Psoas muscle (tissue), 8 donors: ENCODE measurements at regions of chr10 and their contacts with region 1.

Region 1: DNA sequence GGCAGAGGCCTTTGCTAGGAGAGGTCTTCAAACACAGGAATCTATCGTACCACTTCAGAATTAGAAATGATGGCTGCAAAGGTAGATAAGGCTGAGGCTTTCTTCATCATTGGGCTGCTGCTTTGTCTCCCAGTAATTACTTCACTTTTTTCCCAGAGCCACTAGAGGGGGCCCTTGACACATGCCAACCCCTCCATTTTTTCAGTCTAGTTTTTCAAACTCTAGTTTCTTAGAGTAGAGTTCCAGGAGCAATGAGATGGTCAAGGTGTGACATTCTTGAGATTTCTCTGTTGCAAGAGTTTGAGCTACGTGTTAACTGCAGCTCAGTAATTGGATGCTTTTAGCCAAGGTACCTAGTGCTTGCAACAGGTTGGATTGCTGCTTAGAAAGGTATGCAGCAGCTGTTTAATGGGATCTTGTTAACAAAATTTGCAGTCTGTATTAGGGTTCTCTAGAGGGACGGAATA is 33.8 kb upstream of the RBM20 start:
- DNase-seq: no peak
- ATAC-seq: peak; percentile 77 to 85 (median 80)
- H3K4me3 ChIP-seq: no peak overlapping the region
- H3K27ac ChIP-seq: peak overlapping the region; percentile 72
- H3K4me1 ChIP-seq: peaks cover 22% of the 10 kb centered on the region
- H3K27me3 ChIP-seq: no peaks in the 10 kb centered on the region
- CTCF ChIP-seq: peak; percentile 86

Region 2: DNA sequence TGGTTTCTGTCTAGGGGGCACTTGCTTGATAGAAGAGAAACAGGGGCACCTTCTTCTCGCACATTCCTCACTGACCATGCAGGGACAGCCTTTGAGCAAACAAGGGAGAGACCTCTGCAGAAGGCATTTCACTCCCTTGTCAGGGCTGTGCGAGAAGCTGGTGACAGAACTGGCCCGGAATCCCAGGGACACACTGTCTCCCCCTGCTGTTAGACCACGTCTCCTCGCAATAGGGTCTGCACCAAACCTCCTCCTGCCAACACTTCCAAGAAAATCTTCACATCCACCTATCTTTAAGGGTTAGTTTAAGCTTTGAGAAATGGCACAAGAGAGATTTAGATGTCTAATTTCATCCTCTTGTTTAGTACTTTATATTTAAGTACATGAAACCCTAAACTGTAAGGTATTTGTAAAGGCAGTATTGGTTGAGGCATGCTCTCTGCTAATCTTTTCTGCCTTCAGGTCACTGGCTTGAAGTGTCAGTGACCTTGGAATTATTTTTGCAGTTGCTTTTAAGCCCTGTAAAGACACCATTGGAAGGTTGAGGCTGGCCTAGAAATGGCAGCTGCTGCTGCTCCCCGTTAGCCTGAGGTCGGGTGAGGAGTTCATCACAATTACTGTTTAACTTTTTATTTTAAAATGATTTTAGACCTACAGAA is 70.8 kb after region 1 on chr10:
- intact Hi-C with region 1: loop called (anchors 2 to 5 kb)
- DNase-seq: peak in 1 of 2 donors; percentile 34
- ATAC-seq: peak; percentile 51 to 63 (median 60)
- H3K4me3 ChIP-seq: peak overlapping the region; percentile 50
- H3K27ac ChIP-seq: peak overlapping the region; percentile 89
- H3K4me1 ChIP-seq: peaks cover 42% of the 10 kb centered on the region
- H3K27me3 ChIP-seq: no peaks in the 10 kb centered on the region
- CTCF ChIP-seq: peak; percentile 68

Region 3: GRCh38 chr10:110701617-110701971 is 91.3 kb after region 1 on chr10:
- intact Hi-C with region 1: loop called in 1 of 2 experiments (anchors 5 kb)
- DNase-seq: no peak
- ATAC-seq: no peak
- H3K4me3 ChIP-seq: no peak overlapping the region
- H3K27ac ChIP-seq: peak overlapping the region; percentile 86
- H3K4me1 ChIP-seq: peaks cover 56% of the 10 kb centered on the region
- H3K27me3 ChIP-seq: no peaks in the 10 kb centered on the region
- CTCF ChIP-seq: no peak

Region 4: DNA sequence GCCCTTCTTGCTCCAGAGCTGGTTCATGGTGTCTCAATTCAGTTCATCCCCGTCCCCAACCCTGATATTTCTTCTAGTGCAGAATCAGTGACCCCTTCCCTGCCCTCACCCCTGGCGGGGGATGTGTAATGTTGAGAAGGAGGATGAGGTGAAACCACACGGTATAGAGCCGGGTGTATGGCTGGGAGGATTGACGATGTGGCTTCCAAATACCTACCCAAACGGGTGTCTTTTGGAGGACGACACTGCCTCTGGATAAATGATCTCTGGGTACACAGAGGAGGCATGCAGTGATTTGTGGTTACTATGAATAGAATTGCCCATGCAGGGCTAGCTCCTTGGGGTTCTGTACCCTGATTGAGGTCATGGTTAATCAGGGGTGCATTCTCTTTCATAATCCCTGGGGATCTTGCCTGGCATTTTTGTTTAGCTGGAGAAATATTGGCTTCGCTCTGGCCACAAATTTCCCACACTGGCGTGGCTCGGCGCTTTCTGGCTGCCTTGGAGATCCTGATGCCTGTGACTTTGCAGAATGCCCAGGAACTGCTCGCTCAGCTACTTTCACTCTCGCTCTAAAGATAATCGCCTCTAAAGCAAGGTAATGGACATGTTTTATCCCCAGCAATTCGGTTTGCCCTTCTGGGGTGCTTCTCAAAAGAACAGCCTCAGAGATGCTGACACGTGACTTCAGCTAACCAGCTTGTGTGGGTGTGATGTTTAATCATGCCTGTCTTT is 123.0 kb after region 1 on chr10:
- intact Hi-C with region 1: loop called in 1 of 2 experiments (anchors 5 kb)
- DNase-seq: peak in 1 of 2 donors; percentile 71
- ATAC-seq: peak; percentile 68 to 78 (median 76)
- H3K4me3 ChIP-seq: peak overlapping the region; percentile 62
- H3K27ac ChIP-seq: peak overlapping the region; percentile 94
- H3K4me1 ChIP-seq: peaks cover 28% of the 10 kb centered on the region
- H3K27me3 ChIP-seq: no peaks in the 10 kb centered on the region
- CTCF ChIP-seq: no peak

Region 5: DNA sequence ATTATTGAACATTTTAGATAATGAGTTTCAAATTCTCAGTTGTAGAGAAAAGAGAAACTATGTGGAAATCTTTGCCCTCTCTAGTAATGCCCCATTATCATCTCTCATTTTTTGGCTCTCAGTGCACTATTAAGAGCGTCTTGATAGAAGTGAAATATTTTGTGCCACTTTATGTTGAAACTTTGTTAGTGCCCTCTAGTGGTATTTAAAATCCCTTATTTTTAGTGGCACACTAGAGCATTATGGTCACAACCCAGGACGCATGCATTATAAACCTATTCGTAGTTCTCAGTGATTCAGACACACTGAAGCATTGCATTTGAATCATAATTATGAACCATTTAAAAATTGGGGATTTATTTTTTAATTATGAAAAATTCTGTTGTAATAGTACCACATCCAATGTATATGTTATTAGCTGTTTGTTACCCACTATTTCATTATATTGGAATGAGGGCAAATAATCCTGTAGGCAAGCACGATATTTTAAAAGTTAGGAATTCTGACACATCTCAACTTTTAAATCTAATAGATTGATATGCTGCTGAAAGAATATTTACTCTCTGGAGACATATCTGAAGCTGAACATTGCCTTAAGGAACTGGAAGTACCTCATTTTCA is 283.3 kb after region 1 on chr10:
- intact Hi-C with region 1: loop called (anchors 10 kb)
- DNase-seq: no peak
- ATAC-seq: peak; percentile 42 to 91 (median 74)
- H3K4me3 ChIP-seq: no peak overlapping the region
- H3K27ac ChIP-seq: no peak overlapping the region
- H3K4me1 ChIP-seq: no peaks in the 10 kb centered on the region
- H3K27me3 ChIP-seq: no peaks in the 10 kb centered on the region
- CTCF ChIP-seq: peak; percentile 65